Activated CD4-positive, alpha-beta memory T cell treated with anti-CD3 and anti-CD28 coated beads, Interleukin-2, amount 10 ng/mL, durations not matched to agents 7 days and 5 days (primary cell): ENCODE measurements at regions of chr5 and their contacts with region 1.

Region 1: DNA sequence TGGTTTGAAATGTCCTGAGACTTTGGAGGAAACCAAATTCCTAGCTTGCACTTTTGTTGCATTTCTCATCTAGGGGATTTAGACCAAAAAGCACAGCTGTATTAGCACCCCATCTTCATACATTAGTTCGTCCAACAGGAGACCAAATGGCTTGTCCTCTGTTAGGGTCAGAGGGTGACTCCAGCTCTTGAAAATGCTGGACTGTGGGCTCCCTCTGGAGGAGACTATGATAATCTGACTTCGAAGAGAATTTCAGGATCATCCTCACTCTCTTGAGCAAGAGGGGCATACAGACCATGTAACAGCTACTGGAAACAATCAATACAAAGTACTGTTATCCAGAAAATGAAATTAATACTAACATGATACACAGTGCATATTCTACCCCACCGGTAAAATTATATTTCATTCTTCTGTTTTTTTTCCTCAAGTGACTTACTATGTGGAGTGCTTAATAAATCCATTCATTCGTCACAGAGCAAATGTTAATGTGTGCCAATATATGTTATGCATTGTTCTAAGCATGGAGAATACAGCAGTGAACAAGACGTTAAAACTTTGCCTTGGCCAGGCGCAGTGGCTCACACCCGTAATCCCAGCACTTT is 63.7 kb upstream of the PPP2CA start:
- DNase-seq: peak; percentile 30
- H3K4me3 Mint-ChIP-seq: no peak overlapping the region
- H3K27ac Mint-ChIP-seq: no peak overlapping the region
- H3K4me1 Mint-ChIP-seq: no peaks in the 10 kb centered on the region
- H3K27me3 Mint-ChIP-seq: peaks cover 27% of the 10 kb centered on the region

Region 2: GRCh38 chr5:134184155-134185135 is 105.2 kb before region 1 on chr5:
- CTCF ChIA-PET with region 1: interaction called, 41 read pairs
- POLR2A ChIA-PET with region 1: interaction called, 3 read pairs
- DNase-seq: peak; percentile 79
- H3K4me3 Mint-ChIP-seq: no peak overlapping the region
- H3K27ac Mint-ChIP-seq: no peak overlapping the region
- H3K4me1 Mint-ChIP-seq: no peaks in the 10 kb centered on the region
- H3K27me3 Mint-ChIP-seq: peaks cover 6% of the 10 kb centered on the region

Region 3: DNA sequence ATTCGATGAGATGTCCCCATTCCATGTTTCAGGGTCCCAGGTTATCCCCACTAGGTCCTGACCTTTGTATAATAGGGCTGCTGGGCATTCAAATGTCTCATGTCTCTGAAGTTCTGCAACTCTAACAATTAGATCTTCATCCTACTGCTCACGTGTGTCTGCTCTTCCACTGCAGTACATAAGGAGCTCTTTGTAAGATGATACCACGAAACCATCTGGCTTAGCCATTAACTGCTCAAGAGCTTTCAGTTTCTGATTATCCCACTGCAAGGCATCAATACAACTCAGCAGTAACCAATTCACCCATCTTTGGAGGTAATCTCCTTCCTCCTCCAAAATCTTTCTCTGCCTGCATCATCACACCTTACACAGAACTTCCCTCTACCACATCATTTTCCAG is 13.8 kb before region 1 on chr5:
- CTCF ChIA-PET with region 1: interaction called, 12 read pairs
- POLR2A ChIA-PET with region 1: no interaction called
- DNase-seq: no peak
- H3K4me3 Mint-ChIP-seq: no peak overlapping the region
- H3K27ac Mint-ChIP-seq: no peak overlapping the region
- H3K4me1 Mint-ChIP-seq: peaks cover 8% of the 10 kb centered on the region
- H3K27me3 Mint-ChIP-seq: peaks cover 3% of the 10 kb centered on the region